Natural killer cell (primary cell): ENCODE measurements at regions of chr19 and their contacts with region 1.

Region 1: GRCh38 chr19:41397086-41398049 is at the starts of genes BCKDHA and EXOSC5:
- DNase-seq: peak; percentile 97 to 100
- ATAC-seq: peak; percentile 96 to 100 (median 98)
- H3K4me3 ChIP-seq: peak within 1 kb of the TSS; percentile 94
- H3K4me3 Mint-ChIP-seq: peak within 1 kb of the TSS; percentile 97
- H3K27ac ChIP-seq: peak within 1 kb of the TSS; percentile 95
- H3K27ac Mint-ChIP-seq: peak within 1 kb of the TSS; percentile 99 to 100
- H3K4me1 ChIP-seq: peaks cover 29% of the 10 kb centered on the region
- H3K4me1 Mint-ChIP-seq: peaks cover 38 to 45% of the 10 kb centered on the region in 2 donors
- H3K27me3 ChIP-seq: no peaks in the 10 kb centered on the region
- H3K27me3 Mint-ChIP-seq: no peaks in the 10 kb centered on the region
- CTCF ChIP-seq: no peak
- total RNA-seq, gene BCKDHA: 26.5 to 29.0 (median 28.3) TPM
- total RNA-seq, gene EXOSC5: 9.0 to 11.6 (median 9.5) TPM

Region 2: DNA sequence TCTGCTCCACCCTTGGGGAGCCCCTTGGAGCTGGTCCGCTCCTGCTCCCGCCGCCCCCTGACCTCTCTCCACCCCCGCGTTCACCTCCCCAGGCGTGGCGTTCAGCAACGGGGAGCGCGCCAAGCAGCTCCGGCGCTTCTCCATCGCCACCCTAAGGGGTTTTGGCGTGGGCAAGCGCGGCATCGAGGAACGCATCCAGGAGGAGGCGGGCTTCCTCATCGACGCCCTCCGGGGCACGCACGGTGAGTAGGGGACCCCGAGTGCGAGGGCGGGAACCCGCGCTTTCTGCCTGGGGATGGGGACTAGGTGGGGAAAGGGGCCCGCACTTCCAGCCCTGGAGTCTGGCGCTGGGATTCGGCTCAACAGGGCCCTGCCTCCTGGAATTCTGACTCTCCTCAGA is 307.4 kb before region 1 on chr19:
- intact Hi-C with region 1: no loop called
- DNase-seq: peak in 1 of 2 donors; percentile 20
- ATAC-seq: no peak
- H3K4me3 ChIP-seq: no peak overlapping the region
- H3K4me3 Mint-ChIP-seq: no peak overlapping the region
- H3K27ac ChIP-seq: no peak overlapping the region
- H3K27ac Mint-ChIP-seq: peak overlapping the region; percentile 1 to 2
- H3K4me1 ChIP-seq: peaks cover 5% of the 10 kb centered on the region
- H3K4me1 Mint-ChIP-seq: peaks cover 0 to 26% of the 10 kb centered on the region in 2 donors
- H3K27me3 ChIP-seq: peaks cover 9% of the 10 kb centered on the region
- H3K27me3 Mint-ChIP-seq: peaks cover 63 to 76% of the 10 kb centered on the region in 2 donors
- CTCF ChIP-seq: no peak

Region 3: GRCh38 chr19:41233748-41234240 is 163.6 kb before region 1 on chr19:
- intact Hi-C with region 1: no loop called
- DNase-seq: no peak
- ATAC-seq: no peak
- H3K4me3 ChIP-seq: no peak overlapping the region
- H3K4me3 Mint-ChIP-seq: no peak overlapping the region
- H3K27ac ChIP-seq: no peak overlapping the region
- H3K27ac Mint-ChIP-seq: no peak overlapping the region
- H3K4me1 ChIP-seq: no peaks in the 10 kb centered on the region
- H3K4me1 Mint-ChIP-seq: no peaks in the 10 kb centered on the region
- H3K27me3 ChIP-seq: no peaks in the 10 kb centered on the region
- H3K27me3 Mint-ChIP-seq: no peaks in the 10 kb centered on the region
- CTCF ChIP-seq: no peak

Region 4: GRCh38 chr19:41363753-41364523 is 33.4 kb before region 1 on chr19 and contains the start of gene B9D2:
- intact Hi-C with region 1: loop called (anchors 1 kb)
- DNase-seq: peak; percentile 96 to 99
- ATAC-seq: peak; percentile 89 to 97 (median 92)
- H3K4me3 ChIP-seq: peak within 1 kb of the TSS; percentile 93
- H3K4me3 Mint-ChIP-seq: peak within 1 kb of the TSS; percentile 89
- H3K27ac ChIP-seq: peak within 1 kb of the TSS; percentile 99
- H3K27ac Mint-ChIP-seq: peak within 1 kb of the TSS; percentile 98
- H3K4me1 ChIP-seq: peaks cover 18% of the 10 kb centered on the region
- H3K4me1 Mint-ChIP-seq: peaks cover 17 to 22% of the 10 kb centered on the region in 2 donors
- H3K27me3 ChIP-seq: no peaks in the 10 kb centered on the region
- H3K27me3 Mint-ChIP-seq: no peaks in the 10 kb centered on the region
- CTCF ChIP-seq: no peak
- total RNA-seq, gene B9D2: 18.1 to 22.2 (median 18.7) TPM

Region 5: DNA sequence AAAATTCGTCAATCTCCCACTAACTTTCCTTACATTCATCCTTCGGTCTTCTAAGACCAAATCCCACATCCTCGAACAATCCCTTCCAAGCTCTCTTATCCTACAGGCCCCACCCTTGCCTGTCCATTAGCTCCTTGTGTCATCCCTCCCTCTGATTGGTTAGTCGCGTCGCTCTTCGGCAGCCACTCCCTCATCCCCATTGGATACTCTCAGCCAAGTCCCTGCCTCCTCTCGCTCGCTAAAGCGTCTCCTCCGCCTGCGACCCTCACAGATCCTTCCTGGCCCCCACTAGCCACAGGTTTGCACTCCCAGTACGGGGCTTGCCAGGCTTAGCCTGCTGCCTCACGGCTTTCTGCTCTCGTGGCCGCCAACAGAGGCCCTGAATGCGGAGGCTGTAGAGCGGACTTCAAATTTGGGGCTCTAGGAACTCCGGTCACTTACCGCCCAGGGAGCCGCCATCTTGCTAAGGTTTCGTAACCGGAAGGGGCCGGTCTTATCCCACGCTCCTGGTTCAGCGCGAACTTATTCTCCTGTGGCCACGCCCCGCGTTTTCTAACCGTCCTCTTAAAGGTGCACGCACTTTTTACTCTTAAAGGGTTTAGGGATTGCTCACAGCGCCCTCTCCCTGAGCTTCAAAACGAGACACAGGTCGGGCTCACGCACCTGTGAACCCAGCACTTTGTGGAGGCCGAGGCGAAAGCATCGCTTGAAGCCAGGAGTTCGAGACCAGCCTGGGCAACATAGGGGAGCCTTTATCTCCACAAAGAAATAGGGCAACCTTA is 42.3 kb after region 1 on chr19 and contains the start of gene DMAC2:
- intact Hi-C with region 1: loop called (anchors 1 kb)
- DNase-seq: peak; percentile 83 to 97
- ATAC-seq: peak; percentile 99
- H3K4me3 ChIP-seq: peak within 1 kb of the TSS; percentile 78
- H3K4me3 Mint-ChIP-seq: no peak within 1 kb of the TSS
- H3K27ac ChIP-seq: peak within 1 kb of the TSS; percentile 82
- H3K27ac Mint-ChIP-seq: no peak within 1 kb of the TSS
- H3K4me1 ChIP-seq: peaks cover 15% of the 10 kb centered on the region
- H3K4me1 Mint-ChIP-seq: peaks cover 5% of the 10 kb centered on the region in 2 donors
- H3K27me3 ChIP-seq: no peaks in the 10 kb centered on the region
- H3K27me3 Mint-ChIP-seq: peaks cover 0 to 8% of the 10 kb centered on the region in 2 donors
- CTCF ChIP-seq: peak; percentile 42
- total RNA-seq, gene DMAC2: 25.4 to 32.5 (median 29.5) TPM